ENCODE measurements at regions of chr2 and their contacts with region 1.

Region 1: GRCh38 chr2:169716238-169716886 is 17.3 kb upstream of the KLHL23 start:
- DNase-seq: no peak
- ATAC-seq: peak; percentile 22; the same call in 1 of the 2 replicates
- H3K4me3 ChIP-seq: no peak overlapping the region
- H3K27ac ChIP-seq: no peak overlapping the region
- H3K4me1 ChIP-seq: peaks cover 14% of the 10 kb centered on the region; the same call in 1 of the 2 replicates
- H3K27me3 ChIP-seq: no peaks in the 10 kb centered on the region
- CTCF ChIP-seq: no peak

Region 2: DNA sequence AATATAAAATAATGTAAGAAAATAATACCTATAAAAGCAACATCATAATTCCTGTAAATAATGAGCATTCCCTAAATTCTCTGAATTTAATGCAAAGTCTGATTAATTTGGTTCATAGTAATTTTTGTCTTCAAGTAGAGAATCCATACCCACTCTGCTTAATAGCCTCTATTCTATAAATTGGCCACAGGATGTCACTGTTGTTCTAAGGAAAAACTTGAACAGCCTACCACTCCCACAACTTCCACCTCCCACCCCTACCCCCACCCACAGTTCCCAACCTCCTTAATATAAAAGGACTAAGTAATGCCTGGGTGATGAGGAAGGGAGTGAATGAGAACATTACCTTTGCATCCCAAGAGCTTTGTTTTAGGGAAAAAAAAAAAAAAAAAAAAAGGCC is 264.3 kb before region 1 on chr2:
- CTCF ChIA-PET with region 1: interaction called, 11 read pairs
- POLR2A ChIA-PET with region 1: no interaction called
- in situ Hi-C with region 1: no loop called
- intact Hi-C with region 1: no loop called
- DNase-seq: peak; percentile 10
- ATAC-seq: peak; percentile 92
- H3K4me3 ChIP-seq: no peak overlapping the region
- H3K27ac ChIP-seq: no peak overlapping the region
- H3K4me1 ChIP-seq: no peaks in the 10 kb centered on the region
- H3K27me3 ChIP-seq: no peaks in the 10 kb centered on the region
- CTCF ChIP-seq: peak; percentile 72

Region 3: DNA sequence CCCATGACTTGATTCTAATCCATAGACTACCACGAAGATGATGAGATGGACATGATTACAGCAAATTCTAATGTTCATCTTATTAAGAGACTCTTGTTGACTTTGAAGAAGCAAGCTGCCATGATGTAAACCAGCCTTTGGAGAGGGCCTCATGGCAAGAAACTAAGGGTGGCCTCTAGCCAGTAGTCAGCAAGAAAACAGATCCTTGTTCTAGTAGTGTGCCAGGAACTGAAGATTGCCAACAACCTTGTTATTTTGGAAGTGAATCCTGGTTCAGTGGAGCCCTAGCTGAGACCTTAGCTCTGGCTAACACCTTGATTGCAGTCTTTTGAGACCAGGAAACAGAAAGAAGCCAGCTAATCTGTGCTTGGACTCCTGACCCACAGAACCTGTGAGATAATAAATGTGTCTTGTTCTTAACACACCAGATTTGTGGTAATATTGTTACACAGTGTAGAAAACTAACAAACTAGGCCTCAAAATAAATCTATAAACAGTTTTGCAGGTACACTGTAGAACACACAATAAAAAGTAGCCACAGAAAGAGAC is 12.1 kb before region 1 on chr2:
- CTCF ChIA-PET with region 1: no interaction called
- POLR2A ChIA-PET with region 1: interaction called, 11 read pairs
- in situ Hi-C with region 1: no loop called
- intact Hi-C with region 1: no loop called
- DNase-seq: no peak
- ATAC-seq: no peak
- H3K4me3 ChIP-seq: no peak overlapping the region
- H3K27ac ChIP-seq: no peak overlapping the region
- H3K4me1 ChIP-seq: no peaks in the 10 kb centered on the region
- H3K27me3 ChIP-seq: no peaks in the 10 kb centered on the region
- CTCF ChIP-seq: no peak

Region 4: DNA sequence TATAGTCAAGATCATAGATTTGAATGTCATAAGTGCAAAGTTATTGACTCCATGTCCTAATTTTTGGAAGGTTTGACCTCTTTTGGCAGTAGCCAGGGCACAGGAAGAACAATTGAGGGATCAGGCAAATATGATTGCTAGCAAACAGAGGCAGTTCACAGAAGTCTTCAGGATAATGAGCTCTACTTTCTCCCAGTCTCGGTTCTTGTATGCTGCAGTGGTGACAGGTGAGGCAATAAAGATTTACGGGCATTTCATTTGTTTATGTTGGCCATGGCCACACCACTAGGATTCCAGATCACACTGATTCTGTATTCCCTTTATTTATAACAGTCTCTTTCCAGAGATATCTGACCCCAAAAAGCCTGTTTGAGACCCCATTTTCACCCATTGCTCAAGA is 248.4 kb after region 1 on chr2:
- CTCF ChIA-PET with region 1: no interaction called
- POLR2A ChIA-PET with region 1: no interaction called
- in situ Hi-C with region 1: no loop called
- intact Hi-C with region 1: no loop called
- DNase-seq: no peak
- ATAC-seq: no peak; the same call in 1 of the 2 replicates
- H3K4me3 ChIP-seq: no peak overlapping the region
- H3K27ac ChIP-seq: no peak overlapping the region
- H3K4me1 ChIP-seq: peaks cover 5% of the 10 kb centered on the region; the same call in 1 of the 2 replicates
- H3K27me3 ChIP-seq: no peaks in the 10 kb centered on the region
- CTCF ChIP-seq: no peak